Activated CD4-positive, alpha-beta T cell treated with anti-CD3 and anti-CD28 coated beads, Interleukin-2, amount 10 ng/mL, durations not matched to agents 7 days and 5 days (primary cell): ENCODE measurements at regions of chr6 and their contacts with region 1.

Region 1: GRCh38 chr6:44655412-44656342 is 268.2 kb downstream of the CDC5L start:
- DNase-seq: peak; percentile 70
- H3K4me3 Mint-ChIP-seq: no peak overlapping the region
- H3K27ac Mint-ChIP-seq: peak overlapping the region; percentile 85
- H3K4me1 Mint-ChIP-seq: peaks cover 9% of the 10 kb centered on the region
- H3K27me3 Mint-ChIP-seq: peaks cover 8% of the 10 kb centered on the region

Region 2: GRCh38 chr6:44642870-44643529 is 12.7 kb before region 1 on chr6:
- CTCF ChIA-PET with region 1: interaction called, 21 read pairs
- POLR2A ChIA-PET with region 1: no interaction called
- DNase-seq: peak; percentile 27
- H3K4me3 Mint-ChIP-seq: no peak overlapping the region
- H3K27ac Mint-ChIP-seq: peak overlapping the region; percentile 59
- H3K4me1 Mint-ChIP-seq: peaks cover 25% of the 10 kb centered on the region
- H3K27me3 Mint-ChIP-seq: no peaks in the 10 kb centered on the region

Region 3: DNA sequence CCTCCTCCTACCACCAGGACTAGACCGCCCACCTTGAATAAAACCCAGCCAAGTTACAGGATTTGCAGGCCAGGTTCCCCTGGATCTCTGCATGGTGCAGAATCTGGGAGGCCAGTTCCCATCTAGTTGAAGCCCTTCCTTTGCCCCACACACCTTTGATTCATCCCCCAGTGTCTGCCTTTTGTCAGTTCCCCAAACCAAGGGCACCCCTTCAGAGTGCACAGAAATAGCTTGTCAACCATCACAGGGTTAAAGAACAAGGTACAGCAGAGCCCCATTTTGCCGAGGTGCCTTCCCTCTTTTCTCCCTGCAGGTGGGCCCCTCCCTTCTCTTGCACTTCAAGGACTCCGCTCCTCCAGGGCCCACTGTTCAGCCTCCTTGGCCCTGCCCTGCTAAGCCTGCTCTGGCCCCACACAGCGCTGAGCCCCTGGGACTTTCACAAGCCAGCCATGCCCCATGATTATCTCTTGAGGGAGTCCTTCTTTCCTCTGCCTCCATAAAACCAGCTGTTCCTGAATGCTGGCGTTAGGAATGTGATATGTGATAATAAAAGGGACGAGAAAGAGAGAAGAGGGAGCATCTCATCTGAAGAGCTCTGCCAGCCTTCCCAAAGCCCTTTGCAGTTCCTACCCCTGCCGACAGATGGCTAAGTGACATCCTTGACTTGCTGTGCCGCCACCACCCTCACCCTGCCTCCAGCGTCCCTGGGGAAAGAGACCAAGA is 12.2 kb after region 1 on chr6:
- CTCF ChIA-PET with region 1: interaction called, 20 read pairs
- POLR2A ChIA-PET with region 1: no interaction called
- DNase-seq: peak; percentile 33
- H3K4me3 Mint-ChIP-seq: no peak overlapping the region
- H3K27ac Mint-ChIP-seq: peak overlapping the region; percentile 6
- H3K4me1 Mint-ChIP-seq: no peaks in the 10 kb centered on the region
- H3K27me3 Mint-ChIP-seq: no peaks in the 10 kb centered on the region

Region 4: GRCh38 chr6:44735630-44735963 is 79.9 kb after region 1 on chr6:
- CTCF ChIA-PET with region 1: no interaction called
- POLR2A ChIA-PET with region 1: no interaction called
- DNase-seq: no peak
- H3K4me3 Mint-ChIP-seq: no peak overlapping the region
- H3K27ac Mint-ChIP-seq: no peak overlapping the region
- H3K4me1 Mint-ChIP-seq: no peaks in the 10 kb centered on the region
- H3K27me3 Mint-ChIP-seq: no peaks in the 10 kb centered on the region

Region 5: GRCh38 chr6:44778513-44778912 is 122.8 kb after region 1 on chr6:
- CTCF ChIA-PET with region 1: no interaction called
- POLR2A ChIA-PET with region 1: no interaction called
- DNase-seq: no peak
- H3K4me3 Mint-ChIP-seq: no peak overlapping the region
- H3K27ac Mint-ChIP-seq: no peak overlapping the region
- H3K4me1 Mint-ChIP-seq: no peaks in the 10 kb centered on the region
- H3K27me3 Mint-ChIP-seq: no peaks in the 10 kb centered on the region

Region 6: DNA sequence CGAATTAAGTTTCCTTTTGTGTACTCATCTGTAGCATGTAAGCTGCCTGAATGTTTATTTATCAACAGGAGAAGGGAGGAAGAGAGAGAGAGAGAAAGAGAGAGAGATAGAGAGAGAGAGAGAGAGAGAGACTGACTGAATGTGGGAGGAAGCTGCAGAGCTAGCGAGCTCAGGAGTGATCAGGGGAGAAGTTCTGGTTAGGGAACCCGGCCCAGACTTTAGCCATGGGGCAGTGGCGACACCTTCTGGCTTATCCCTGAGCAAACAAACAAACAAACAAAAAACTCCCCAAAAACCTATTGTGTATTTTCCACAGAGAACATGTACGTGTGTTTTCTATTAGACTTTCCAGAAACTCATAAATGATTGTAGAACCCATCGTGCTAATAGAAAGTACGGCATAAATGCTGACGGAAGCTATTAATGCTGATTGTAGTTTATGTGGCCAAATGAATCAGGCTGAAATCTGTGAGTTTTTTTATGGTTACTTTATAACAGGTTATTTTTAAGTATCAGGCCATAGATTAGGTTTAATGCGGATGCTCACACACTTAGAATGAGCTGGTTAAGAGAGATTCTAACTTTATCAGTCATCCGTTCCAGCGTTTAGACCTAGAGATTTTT is 1267.2 kb after region 1 on chr6:
- CTCF ChIA-PET with region 1: interaction called, 12 read pairs
- POLR2A ChIA-PET with region 1: no interaction called
- DNase-seq: peak; percentile 76
- H3K4me3 Mint-ChIP-seq: no peak overlapping the region
- H3K27ac Mint-ChIP-seq: peak overlapping the region; percentile 58
- H3K4me1 Mint-ChIP-seq: peaks cover 43% of the 10 kb centered on the region
- H3K27me3 Mint-ChIP-seq: no peaks in the 10 kb centered on the region